Activated CD4-positive, alpha-beta memory T cell treated with anti-CD3 and anti-CD28 coated beads, Interleukin-2, amount 10 ng/mL, durations not matched to agents 7 days and 5 days (primary cell): ENCODE measurements at regions of chr11 and their contacts with region 1.

Region 1: GRCh38 chr11:78416305-78417178 is 1.1 kb downstream of the GAB2 start:
- DNase-seq: peak; percentile 86
- H3K4me3 Mint-ChIP-seq: peak overlapping the region; percentile 95
- H3K27ac Mint-ChIP-seq: peak overlapping the region; percentile 84
- H3K4me1 Mint-ChIP-seq: peaks cover 66% of the 10 kb centered on the region
- H3K27me3 Mint-ChIP-seq: peaks cover 18% of the 10 kb centered on the region

Region 2: DNA sequence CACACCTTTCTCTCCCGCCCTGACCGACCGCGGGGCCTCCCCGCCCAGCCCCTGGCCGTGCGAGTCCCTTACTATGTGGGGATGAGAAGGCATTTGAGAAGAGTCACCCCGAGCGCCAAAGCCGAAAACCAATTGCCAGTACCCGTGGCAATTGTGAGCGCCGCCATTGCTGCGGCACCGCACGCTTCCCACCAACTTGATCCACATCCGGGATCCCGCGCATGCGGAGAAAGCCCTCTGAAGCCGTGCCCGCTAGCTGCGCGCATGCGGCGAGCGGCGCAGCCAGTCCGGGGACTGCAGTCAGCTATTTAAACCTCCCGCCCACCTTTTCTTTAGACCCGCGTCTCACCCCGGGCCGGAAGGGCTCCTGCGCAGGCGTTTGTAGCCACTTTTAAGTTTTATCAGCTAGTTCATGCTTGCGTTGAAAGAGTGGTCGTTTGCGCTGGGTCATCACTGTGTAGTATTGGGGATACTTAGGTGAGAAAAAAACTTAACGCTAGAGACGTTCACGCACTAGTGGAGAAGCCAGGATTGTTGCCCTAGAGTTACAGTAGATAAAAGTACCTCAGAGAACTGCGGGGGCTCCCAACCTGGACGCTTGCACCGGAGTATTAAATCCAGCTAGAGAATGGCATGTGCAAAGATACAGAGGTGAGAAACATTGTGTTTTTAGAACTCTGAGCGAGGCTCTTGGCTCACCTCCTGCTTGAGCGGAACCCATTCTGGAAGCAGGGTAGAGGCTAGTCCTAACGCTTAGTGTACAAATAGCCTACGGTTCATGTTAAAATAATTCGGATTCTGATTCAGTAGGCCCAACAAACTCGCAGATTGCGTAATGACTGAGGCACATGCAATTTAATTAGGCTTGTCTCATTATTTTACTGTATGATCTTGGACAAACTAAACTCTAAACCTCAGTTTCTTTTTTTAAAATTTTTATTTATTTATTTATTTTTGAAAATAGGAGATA is 276.8 kb before region 1 on chr11 and contains the start of gene ALG8:
- CTCF ChIA-PET with region 1: no interaction called
- POLR2A ChIA-PET with region 1: interaction called, 27 read pairs
- DNase-seq: peak; percentile 96
- H3K4me3 Mint-ChIP-seq: peak within 1 kb of the TSS; percentile 85
- H3K27ac Mint-ChIP-seq: peak within 1 kb of the TSS; percentile 91
- H3K4me1 Mint-ChIP-seq: peaks cover 52% of the 10 kb centered on the region
- H3K27me3 Mint-ChIP-seq: no peaks in the 10 kb centered on the region
- total RNA-seq, gene ALG8: 40.2 to 48.1 TPM

Region 3: GRCh38 chr11:78237293-78238046 is 179.1 kb before region 1 on chr11:
- CTCF ChIA-PET with region 1: no interaction called
- POLR2A ChIA-PET with region 1: no interaction called
- DNase-seq: no peak
- H3K4me3 Mint-ChIP-seq: no peak overlapping the region
- H3K27ac Mint-ChIP-seq: no peak overlapping the region
- H3K4me1 Mint-ChIP-seq: peaks cover 1% of the 10 kb centered on the region
- H3K27me3 Mint-ChIP-seq: no peaks in the 10 kb centered on the region

Region 4: DNA sequence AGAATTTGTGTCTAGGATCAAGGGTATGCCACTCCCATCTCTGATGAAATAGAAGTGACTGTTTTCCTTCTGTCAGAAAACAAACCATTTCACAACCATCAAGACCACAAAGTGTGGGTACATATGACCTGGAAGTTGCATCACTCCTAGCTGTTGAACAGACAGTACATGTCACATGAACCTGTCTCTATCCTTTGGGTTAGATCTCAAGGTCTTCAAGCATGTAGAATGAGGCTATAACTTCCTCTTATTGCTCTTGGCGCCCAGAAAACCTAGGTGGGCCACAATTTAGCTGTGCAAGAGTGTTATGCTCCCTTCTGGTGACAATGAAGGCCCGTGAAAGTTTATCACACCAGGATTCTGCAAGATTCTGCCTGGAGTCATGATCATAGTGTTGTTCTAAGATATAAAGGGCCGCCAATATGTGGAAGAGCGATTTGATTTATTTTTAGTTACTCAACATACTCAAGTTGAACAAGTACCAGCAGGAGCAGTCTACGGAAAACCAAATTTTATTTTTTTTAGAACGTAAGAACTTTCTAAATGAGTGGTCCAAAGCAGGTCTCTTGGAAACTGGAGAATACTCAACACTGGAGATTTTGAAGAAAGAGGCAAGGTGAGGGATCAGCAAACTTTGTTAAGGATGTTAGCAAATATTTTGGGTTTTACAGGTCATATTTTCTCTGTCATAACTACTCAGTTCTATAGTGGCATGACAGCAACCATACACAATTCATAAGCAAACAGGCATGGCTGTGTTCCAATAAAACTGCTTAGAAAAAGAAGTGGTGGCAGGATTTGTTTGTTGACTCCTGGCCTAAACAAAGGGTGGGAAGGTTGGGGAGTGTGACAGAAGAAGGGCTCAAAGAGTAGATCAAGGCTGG is 126.0 kb before region 1 on chr11:
- CTCF ChIA-PET with region 1: interaction called, 9 read pairs
- POLR2A ChIA-PET with region 1: interaction called, 59 read pairs
- DNase-seq: peak; percentile 41
- H3K4me3 Mint-ChIP-seq: no peak overlapping the region
- H3K27ac Mint-ChIP-seq: peak overlapping the region; percentile 93
- H3K4me1 Mint-ChIP-seq: peaks cover 57% of the 10 kb centered on the region
- H3K27me3 Mint-ChIP-seq: no peaks in the 10 kb centered on the region

Region 5: DNA sequence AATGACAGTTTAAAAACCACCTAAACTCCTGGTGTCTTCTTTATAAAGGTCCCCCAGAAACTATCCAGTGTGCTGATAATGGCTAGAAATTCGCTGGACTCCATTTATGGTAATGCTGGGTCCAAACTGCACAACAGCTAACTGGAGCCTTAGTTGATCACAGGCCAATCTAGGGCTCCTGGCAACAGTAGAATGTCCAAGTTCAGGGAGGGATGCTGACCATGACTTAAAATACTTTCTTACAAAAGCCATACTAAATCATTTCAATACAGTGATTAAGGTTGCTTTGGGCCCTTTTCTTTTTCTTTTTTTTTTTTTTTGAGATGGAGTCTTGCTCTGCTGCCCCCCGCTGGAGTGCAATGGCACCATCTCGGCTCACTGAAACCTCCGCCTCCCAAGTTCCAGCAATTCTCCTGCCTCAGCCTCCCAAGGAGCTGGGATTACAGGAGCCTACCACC is 15.5 kb after region 1 on chr11:
- CTCF ChIA-PET with region 1: interaction called, 73 read pairs
- POLR2A ChIA-PET with region 1: interaction called, 51 read pairs
- DNase-seq: no peak
- H3K4me3 Mint-ChIP-seq: no peak overlapping the region
- H3K27ac Mint-ChIP-seq: no peak overlapping the region
- H3K4me1 Mint-ChIP-seq: peaks cover 31% of the 10 kb centered on the region
- H3K27me3 Mint-ChIP-seq: no peaks in the 10 kb centered on the region

Region 6: DNA sequence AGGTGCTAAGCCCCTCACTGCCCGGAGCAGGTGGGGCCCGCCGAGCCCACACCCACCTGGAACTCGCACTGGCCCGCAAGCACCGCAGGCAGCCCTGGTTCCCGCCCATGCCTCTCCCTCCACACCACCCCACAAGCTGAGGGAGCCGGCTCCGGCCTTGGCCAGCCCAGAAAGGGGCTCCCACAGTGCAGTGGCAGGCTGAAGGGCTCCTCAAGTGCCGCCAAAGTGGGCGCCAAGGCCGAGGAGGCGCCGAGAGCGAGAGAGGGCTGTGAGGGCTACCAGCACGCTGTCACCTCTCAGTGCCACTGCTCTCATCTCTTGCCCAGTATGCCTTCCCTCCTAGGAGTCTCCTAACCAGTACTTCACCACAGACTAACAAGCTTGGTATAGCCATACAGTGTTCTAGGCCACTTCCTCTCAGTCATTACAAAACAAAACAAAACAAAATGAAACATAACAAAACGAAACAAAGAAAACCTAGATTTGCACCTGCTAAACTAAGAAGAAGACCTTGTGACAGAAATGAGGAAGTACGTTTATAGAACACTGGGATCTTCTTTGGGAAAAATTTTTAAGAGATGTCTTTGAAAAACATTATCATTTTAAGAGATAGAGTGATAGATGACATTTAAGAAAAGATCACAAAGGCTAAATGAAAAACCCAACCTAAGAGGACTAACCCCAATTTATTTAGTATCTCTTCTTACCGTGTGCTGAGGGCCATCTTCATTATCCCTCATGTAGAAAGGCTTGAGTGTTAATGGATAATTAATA is 48.8 kb after region 1 on chr11:
- CTCF ChIA-PET with region 1: interaction called, 4 read pairs
- POLR2A ChIA-PET with region 1: interaction called, 27 read pairs
- DNase-seq: peak; percentile 65
- H3K4me3 Mint-ChIP-seq: peak overlapping the region; percentile 72
- H3K27ac Mint-ChIP-seq: peak overlapping the region; percentile 97
- H3K4me1 Mint-ChIP-seq: peaks cover 45% of the 10 kb centered on the region
- H3K27me3 Mint-ChIP-seq: no peaks in the 10 kb centered on the region

Region 7: DNA sequence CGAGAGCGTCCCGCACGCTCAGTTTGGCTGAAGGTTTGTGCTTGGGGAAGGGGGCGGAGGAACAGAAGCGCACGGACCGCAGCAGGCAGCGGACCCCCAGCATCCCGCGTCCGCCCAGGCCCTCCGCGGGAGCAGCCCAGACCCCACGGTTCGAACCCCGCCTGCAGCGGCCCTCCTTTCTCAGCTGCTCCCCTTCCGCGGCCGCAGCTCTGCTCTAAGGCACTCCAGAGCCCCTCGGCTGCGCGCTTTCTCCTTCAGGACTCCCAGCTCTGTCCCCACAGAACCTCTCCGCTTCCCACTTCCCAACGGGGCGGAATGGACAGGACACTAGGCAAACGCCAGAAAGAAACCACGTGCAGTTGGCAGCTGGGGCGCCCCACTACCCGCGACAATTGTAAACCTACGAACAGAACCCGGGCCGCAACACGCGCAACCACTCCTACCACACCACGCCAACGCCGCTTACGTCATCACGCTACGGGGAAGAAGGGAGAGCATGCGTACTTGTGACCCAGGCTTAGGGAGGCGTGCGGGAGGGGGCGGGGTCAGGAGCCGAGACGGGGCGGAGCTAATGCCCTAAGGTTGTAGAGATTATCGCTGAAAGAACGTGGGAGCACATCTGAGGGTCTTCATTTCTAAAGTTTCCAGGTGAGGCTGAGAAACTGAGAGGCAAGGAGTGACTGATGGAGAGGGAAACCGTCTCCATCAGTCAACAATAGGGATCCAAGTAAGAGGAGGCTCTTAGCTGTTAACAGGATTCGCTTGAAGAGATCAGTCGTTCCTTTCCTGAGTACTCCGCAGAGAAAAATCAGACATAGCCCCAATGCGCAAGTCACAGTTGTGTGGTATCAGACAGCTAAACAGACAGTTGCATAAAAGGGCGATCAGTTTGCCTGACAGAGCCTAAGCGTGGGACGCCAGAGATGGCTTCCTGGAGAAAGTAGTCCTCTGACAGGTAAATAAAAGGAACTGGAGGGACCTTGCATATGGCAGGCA is 158.1 kb after region 1 on chr11 and contains the start of gene NARS2:
- CTCF ChIA-PET with region 1: interaction called, 28 read pairs
- POLR2A ChIA-PET with region 1: interaction called, 28 read pairs
- DNase-seq: peak; percentile 98
- H3K4me3 Mint-ChIP-seq: peak within 1 kb of the TSS; percentile 86
- H3K27ac Mint-ChIP-seq: peak within 1 kb of the TSS; percentile 71
- H3K4me1 Mint-ChIP-seq: peaks cover 31% of the 10 kb centered on the region
- H3K27me3 Mint-ChIP-seq: no peaks in the 10 kb centered on the region
- total RNA-seq, gene NARS2: 13.4 to 13.9 TPM